Endothelial cell of umbilical vein (primary cell): ENCODE measurements at regions of chr2 and their contacts with region 1.

Region 1: DNA sequence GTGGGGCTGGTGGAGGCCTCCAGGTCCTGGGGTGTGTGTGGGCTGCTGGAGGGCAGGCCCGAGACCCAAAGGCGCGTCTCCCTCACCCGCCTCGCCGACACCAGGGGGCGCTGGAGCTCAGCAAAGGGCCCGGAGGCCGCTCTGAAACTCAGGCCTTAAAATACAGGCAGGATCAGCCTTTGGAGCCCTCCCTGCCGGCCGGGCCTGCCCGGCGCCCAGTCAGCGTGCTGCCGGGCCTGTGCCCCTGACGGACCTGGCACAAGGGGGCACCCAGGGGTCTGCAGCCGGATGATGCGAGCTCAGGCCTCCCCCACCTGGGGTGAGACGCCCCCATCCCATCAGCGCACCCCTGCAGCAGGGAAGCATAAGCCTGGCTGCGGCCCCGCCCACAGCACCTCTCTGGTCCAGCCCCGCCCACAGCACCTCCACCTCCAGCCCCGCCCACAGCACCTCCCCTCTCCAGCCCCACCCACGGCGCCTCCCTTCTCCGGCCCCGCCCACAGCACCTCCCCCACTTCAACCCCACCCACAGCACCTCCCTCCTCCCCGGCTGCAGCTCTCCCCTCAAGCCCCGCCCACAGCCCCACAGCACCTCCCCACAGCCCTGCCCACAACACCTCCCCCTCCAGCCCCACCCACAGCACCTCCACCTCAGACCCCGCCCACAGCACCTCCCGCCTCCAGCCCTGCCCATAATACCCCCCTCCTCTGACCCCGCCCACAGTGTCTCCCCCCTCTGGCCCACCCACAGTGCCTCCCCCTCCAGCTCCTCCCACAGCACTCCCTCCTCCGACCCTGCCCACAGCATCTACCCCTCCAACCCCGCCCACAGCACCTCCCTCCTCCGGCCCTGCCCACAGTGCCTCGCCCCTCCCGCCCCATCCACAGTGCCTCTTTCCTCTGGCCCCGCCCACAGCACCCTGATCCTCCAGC is 92.8 kb upstream of the OTOS start:
- DNase-seq: peak; percentile 44
- H3K4me3 ChIP-seq: no peak overlapping the region
- H3K27ac ChIP-seq: no peak overlapping the region
- H3K4me1 ChIP-seq: peaks cover 6% of the 10 kb centered on the region
- H3K27me3 ChIP-seq: no peaks in the 10 kb centered on the region
- CTCF ChIP-seq: peak; percentile 81 to 93
- POLR2A ChIP-seq: no peak

Region 2: GRCh38 chr2:240343176-240343947 is 110.1 kb after region 1 on chr2:
- CTCF ChIA-PET with region 1: interaction called, 12 read pairs
- POLR2A ChIA-PET with region 1: no interaction called
- dilution Hi-C with region 1: no loop called
- intact Hi-C with region 1: no loop called
- DNase-seq: no peak
- H3K4me3 ChIP-seq: no peak overlapping the region
- H3K27ac ChIP-seq: no peak overlapping the region
- H3K4me1 ChIP-seq: no peaks in the 10 kb centered on the region
- H3K27me3 ChIP-seq: no peaks in the 10 kb centered on the region
- CTCF ChIP-seq: no peak
- POLR2A ChIP-seq: no peak

Region 3: DNA sequence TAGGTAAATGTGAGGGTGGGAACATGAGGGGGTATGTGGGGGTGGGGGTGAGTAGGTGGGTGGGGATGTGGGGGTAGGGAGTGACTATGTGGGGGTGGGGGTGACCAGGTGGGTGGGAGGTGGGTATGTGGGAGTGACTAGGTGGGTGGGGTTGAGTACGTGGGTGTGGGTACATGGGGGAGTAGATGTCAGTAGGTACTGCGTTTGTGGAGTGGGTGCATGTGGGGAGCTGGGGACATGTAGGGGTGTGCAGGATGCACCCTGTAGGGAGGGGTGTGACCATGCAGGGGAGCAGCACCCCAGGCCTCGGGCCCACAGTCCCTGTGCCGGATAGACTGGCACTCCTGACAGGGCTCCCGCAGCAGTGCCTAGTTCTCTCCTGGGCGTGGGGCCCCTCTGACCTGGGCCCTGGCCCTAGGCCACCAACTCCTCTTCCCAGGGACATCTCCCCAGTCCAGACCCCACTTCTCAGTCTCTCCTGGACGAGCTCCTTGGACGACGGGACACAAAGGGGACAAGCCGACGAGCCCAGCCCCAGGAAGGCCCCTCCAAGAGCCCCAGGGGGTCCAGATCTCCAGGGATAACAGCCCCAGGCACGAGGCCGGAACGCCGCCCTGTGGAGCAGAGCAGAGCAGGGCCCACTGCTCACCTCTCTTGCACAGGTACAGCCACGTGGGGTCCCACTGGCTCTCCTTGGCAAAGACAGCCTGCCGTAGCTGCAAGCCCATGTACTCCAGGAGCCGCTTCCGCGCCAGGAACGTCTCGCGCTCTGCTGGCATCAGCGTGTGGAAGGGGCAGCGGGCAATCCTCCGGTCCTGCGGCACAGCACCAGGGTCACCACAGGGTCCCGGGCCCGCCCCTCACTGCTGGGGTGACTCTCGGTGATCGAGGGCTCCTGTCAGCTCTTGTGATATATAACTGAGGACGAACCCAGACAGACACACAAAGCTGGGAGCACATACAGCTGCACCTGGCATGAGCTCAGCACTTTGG is 266.4 kb after region 1 on chr2:
- CTCF ChIA-PET with region 1: interaction called, 14 read pairs
- POLR2A ChIA-PET with region 1: no interaction called
- dilution Hi-C with region 1: no loop called
- intact Hi-C with region 1: loop called (anchors 1 kb)
- DNase-seq: no peak
- H3K4me3 ChIP-seq: no peak overlapping the region
- H3K27ac ChIP-seq: no peak overlapping the region
- H3K4me1 ChIP-seq: no peaks in the 10 kb centered on the region
- H3K27me3 ChIP-seq: no peaks in the 10 kb centered on the region
- CTCF ChIP-seq: no peak
- POLR2A ChIP-seq: no peak

Region 4: DNA sequence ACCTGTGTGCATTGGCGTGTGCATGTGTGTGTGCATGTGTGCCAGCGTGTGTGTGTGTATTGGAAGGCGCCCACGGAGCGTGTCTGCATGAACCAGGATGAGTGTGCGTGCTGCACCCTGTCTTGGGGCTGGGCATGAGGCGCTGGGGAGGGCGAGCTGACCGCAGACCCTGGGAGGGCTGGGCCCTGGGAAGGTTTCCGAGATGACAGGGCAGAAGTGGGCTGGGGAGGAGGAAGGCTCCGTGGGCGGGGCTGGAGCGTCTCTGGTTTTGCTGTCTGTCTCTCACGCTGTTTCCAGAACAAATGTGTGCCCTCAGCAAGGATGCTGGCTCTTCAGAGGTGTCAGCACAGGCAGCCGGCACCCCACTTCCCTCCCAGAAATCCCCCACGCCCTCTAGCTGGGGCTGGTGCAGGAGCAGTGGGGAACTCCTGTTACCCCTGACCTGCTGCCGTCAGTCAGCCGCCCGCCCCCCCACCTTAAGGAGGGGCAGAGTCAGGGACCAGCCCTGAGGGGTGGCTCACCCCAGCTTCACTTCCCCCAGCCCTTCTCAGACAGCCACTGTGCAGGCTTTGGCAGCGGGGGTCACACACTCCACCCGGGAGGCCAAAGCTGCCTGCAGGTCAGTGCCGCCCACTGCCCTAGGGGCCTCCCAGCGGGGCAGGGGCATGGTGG is 391.9 kb after region 1 on chr2 and contains the start of gene GPR35:
- CTCF ChIA-PET with region 1: no interaction called
- POLR2A ChIA-PET with region 1: no interaction called
- dilution Hi-C with region 1: no loop called
- intact Hi-C with region 1: no loop called
- DNase-seq: no peak
- H3K4me3 ChIP-seq: no peak within 1 kb of the TSS
- H3K27ac ChIP-seq: no peak within 1 kb of the TSS
- H3K4me1 ChIP-seq: no peaks in the 10 kb centered on the region
- H3K27me3 ChIP-seq: no peaks in the 10 kb centered on the region
- CTCF ChIP-seq: no peak
- POLR2A ChIP-seq: no peak
- total RNA-seq, gene GPR35: 0.25 and 0.33 TPM in 2 replicates